ENCODE measurements at regions of chr5 and their contacts with region 1.

Region 1: GRCh38 chr5:129852747-129853352 is 51.4 kb upstream of the CHSY3 start:
- DNase-seq: peak; percentile 53
- ATAC-seq: no peak
- H3K4me3 ChIP-seq: no peak overlapping the region
- H3K4me3 Mint-ChIP-seq: no peak overlapping the region
- H3K27ac ChIP-seq: no peak overlapping the region
- H3K27ac Mint-ChIP-seq: no peak overlapping the region
- H3K4me1 ChIP-seq: no peaks in the 10 kb centered on the region
- H3K4me1 Mint-ChIP-seq: no peaks in the 10 kb centered on the region
- H3K27me3 ChIP-seq: no peaks in the 10 kb centered on the region
- H3K27me3 Mint-ChIP-seq: peaks cover 4% of the 10 kb centered on the region
- CTCF ChIP-seq: peak; percentile 92

Region 2: GRCh38 chr5:128213340-128213739 is 1639.5 kb before region 1 on chr5:
- CTCF ChIA-PET with region 1: interaction called, 3 read pairs
- POLR2A ChIA-PET with region 1: no interaction called
- intact Hi-C with region 1: loop called (anchors 5 kb)
- DNase-seq: peak; percentile 23
- ATAC-seq: no peak
- H3K4me3 ChIP-seq: no peak overlapping the region
- H3K4me3 Mint-ChIP-seq: no peak overlapping the region
- H3K27ac ChIP-seq: no peak overlapping the region
- H3K27ac Mint-ChIP-seq: no peak overlapping the region
- H3K4me1 ChIP-seq: no peaks in the 10 kb centered on the region
- H3K4me1 Mint-ChIP-seq: no peaks in the 10 kb centered on the region
- H3K27me3 ChIP-seq: no peaks in the 10 kb centered on the region
- H3K27me3 Mint-ChIP-seq: no peaks in the 10 kb centered on the region
- CTCF ChIP-seq: peak; percentile 61

Region 3: GRCh38 chr5:128905571-128906110 is 947.2 kb before region 1 on chr5:
- CTCF ChIA-PET with region 1: interaction called, 5 read pairs
- POLR2A ChIA-PET with region 1: no interaction called
- intact Hi-C with region 1: loop called (anchors 5 kb)
- DNase-seq: peak; percentile 53
- ATAC-seq: peak; percentile 47
- H3K4me3 ChIP-seq: no peak overlapping the region
- H3K4me3 Mint-ChIP-seq: no peak overlapping the region
- H3K27ac ChIP-seq: no peak overlapping the region
- H3K27ac Mint-ChIP-seq: no peak overlapping the region
- H3K4me1 ChIP-seq: no peaks in the 10 kb centered on the region
- H3K4me1 Mint-ChIP-seq: no peaks in the 10 kb centered on the region
- H3K27me3 ChIP-seq: no peaks in the 10 kb centered on the region
- H3K27me3 Mint-ChIP-seq: no peaks in the 10 kb centered on the region
- CTCF ChIP-seq: peak; percentile 86

Region 4: DNA sequence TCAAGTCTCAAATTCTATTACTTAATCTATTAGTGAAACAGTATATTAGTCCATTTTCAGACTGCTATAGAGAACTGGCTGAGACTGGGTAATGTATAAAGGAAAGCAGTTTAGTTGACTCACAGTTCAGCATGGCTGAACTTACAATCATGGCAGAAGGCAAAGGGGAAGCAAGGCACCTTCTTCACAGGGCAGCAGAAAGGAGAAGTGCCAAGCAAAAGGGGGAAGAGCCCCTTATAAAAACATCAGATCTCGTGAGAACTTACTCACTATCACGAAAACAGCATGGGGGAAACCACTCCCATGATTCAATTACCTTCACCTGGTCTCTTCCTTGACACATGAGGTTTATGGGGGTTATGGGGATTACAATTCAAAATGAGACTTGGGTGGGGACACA is 16.5 kb before region 1 on chr5:
- CTCF ChIA-PET with region 1: interaction called, 11 read pairs
- POLR2A ChIA-PET with region 1: no interaction called
- intact Hi-C with region 1: no loop called
- DNase-seq: no peak
- ATAC-seq: no peak
- H3K4me3 ChIP-seq: no peak overlapping the region
- H3K4me3 Mint-ChIP-seq: no peak overlapping the region
- H3K27ac ChIP-seq: no peak overlapping the region
- H3K27ac Mint-ChIP-seq: no peak overlapping the region
- H3K4me1 ChIP-seq: no peaks in the 10 kb centered on the region
- H3K4me1 Mint-ChIP-seq: no peaks in the 10 kb centered on the region
- H3K27me3 ChIP-seq: no peaks in the 10 kb centered on the region
- H3K27me3 Mint-ChIP-seq: no peaks in the 10 kb centered on the region
- CTCF ChIP-seq: no peak